ENCODE measurements at regions of chr1 and their contacts with region 1.

Region 1: DNA sequence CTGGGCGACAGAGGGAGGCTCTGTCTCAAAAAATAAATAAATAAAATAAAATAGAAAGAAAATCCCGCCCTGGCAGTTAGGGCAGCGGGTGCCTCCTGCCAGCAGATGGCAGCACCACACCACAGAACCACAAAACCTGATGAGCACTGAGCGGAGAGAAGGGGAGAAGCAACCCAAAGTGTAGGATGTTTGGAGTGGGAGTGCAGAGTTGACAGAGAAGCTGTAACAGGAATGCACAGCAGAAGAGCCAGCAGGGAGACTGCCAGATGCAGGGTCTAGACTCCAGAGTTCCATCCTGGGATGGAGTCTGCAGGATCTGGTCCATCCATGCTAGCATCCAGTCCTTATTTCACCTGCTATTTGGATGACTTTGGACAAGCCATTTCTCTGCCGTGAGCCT is 29.7 kb upstream of the KIRREL1 start:
- DNase-seq: peak; percentile 43
- H3K4me3 ChIP-seq: no peak overlapping the region
- H3K27ac ChIP-seq: no peak overlapping the region
- H3K27me3 ChIP-seq: no peaks in the 10 kb centered on the region
- CTCF ChIP-seq: peak; percentile 91

Region 2: DNA sequence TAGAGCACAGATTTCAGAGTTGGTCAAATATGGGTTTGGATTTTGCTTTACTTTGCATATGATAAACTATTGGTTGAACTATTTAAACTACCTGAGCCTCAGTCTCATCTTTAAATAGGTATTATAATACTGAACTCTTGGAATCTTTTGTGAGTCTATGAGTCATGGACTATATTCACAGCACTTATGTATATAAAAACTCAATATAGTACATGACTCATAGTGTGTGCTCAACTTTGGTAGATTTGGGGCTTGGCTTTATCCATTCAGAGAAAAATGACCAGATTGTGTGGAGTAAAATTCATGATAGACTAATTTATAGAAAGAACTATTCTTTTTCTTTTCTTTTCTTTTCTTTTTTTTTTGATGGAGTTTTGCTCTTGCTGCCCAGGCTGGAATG is 291.8 kb before region 1 on chr1:
- in situ Hi-C with region 1: no loop called
- DNase-seq: no peak
- H3K4me3 ChIP-seq: no peak overlapping the region
- H3K27ac ChIP-seq: no peak overlapping the region
- H3K27me3 ChIP-seq: no peaks in the 10 kb centered on the region
- CTCF ChIP-seq: no peak

Region 3: GRCh38 chr1:158124999-158125398 is 161.3 kb after region 1 on chr1:
- in situ Hi-C with region 1: loop called (anchors 25 kb)
- DNase-seq: peak; percentile 94
- H3K4me3 ChIP-seq: no peak overlapping the region
- H3K27ac ChIP-seq: no peak overlapping the region
- H3K27me3 ChIP-seq: peaks cover 4% of the 10 kb centered on the region
- CTCF ChIP-seq: peak; percentile 96

Region 4: DNA sequence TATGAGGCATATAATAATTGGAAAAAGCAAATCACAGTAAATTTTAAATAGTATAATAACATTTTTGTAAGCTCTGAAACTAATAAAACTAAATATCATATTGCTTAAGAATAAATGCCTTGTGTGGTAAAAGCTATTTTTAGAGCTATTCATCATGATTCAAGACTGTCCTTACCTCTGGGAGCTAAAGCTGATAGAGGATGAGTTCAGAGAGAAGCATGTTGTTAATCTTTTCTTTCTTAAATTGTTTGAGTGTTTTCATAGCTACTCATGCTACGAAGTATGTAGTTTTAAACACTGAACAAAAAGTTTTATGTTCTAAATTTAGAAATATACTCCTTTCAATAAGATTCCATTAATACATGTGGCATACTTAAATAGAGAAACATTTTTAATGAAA is 1076.5 kb after region 1 on chr1:
- in situ Hi-C with region 1: loop called (anchors 25 kb)
- DNase-seq: peak; percentile 16
- H3K4me3 ChIP-seq: no peak overlapping the region
- H3K27ac ChIP-seq: peak overlapping the region; percentile 64
- H3K27me3 ChIP-seq: no peaks in the 10 kb centered on the region
- CTCF ChIP-seq: no peak

Measured in brain microvascular endothelial cell (primary cell).